IMR-90 (cell line): ENCODE measurements at regions of chr4 and their contacts with region 1.

Region 1: DNA sequence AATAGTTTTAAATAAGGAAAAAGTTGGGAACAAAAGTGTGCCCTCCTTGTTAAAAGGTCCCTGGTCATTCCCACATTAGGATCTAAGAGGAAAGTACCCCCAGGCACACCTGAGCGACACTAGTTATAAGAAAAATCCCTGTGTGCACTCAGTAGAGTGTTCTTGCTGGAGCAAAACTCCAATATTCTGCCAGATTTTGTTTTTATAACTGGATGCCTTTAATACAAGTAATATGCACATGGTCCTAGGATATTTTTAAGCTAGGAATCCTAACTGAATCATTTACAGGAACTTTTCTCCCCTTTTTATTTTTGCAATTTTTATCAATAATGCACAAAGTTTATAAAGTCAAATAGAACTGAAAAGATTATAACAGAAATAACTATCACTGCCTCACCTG is 68.6 kb downstream of the BEND4 start:
- DNase-seq: peak; percentile 21
- ATAC-seq: peak; percentile 44
- H3K4me3 ChIP-seq: no peak overlapping the region
- H3K27ac ChIP-seq: no peak overlapping the region
- H3K4me1 ChIP-seq: 0 out of 2 replicates have a peak, but pooled peaks cover 2% of the 10 kb centered on the region
- H3K27me3 ChIP-seq: no peaks in the 10 kb centered on the region
- CTCF ChIP-seq: no peak
- POLR2A ChIP-seq: no peak
- RAD21 ChIP-seq: no peak

Region 2: GRCh38 chr4:42066402-42066801 is 17.4 kb before region 1 on chr4:
- CTCF ChIA-PET with region 1: interaction called, 10 read pairs
- POLR2A ChIA-PET with region 1: no interaction called
- dilution Hi-C with region 1: no loop called
- in situ Hi-C with region 1: no loop called
- intact Hi-C with region 1: no loop called
- DNase-seq: no peak
- ATAC-seq: no peak
- H3K4me3 ChIP-seq: no peak overlapping the region
- H3K27ac ChIP-seq: no peak overlapping the region
- H3K4me1 ChIP-seq: no peaks in the 10 kb centered on the region
- H3K27me3 ChIP-seq: no peaks in the 10 kb centered on the region
- CTCF ChIP-seq: no peak
- POLR2A ChIP-seq: no peak
- RAD21 ChIP-seq: no peak